CD8-positive, alpha-beta T cell (primary cell): ENCODE measurements at regions of chr14 and their contacts with region 1.

Region 1: GRCh38 chr14:90697577-90698206 is 118.5 kb downstream of the TTC7B start:
- DNase-seq: peak; percentile 55 to 85 (median 73)
- ATAC-seq: peak; percentile 90
- H3K4me3 ChIP-seq: no peak overlapping the region
- H3K4me3 Mint-ChIP-seq: no peak overlapping the region
- H3K27ac ChIP-seq: no peak overlapping the region
- H3K27ac Mint-ChIP-seq: no peak overlapping the region
- H3K4me1 ChIP-seq: no peaks in the 10 kb centered on the region
- H3K4me1 Mint-ChIP-seq: no peaks in the 10 kb centered on the region
- H3K27me3 ChIP-seq: no peaks in the 10 kb centered on the region
- H3K27me3 Mint-ChIP-seq: no peaks in the 10 kb centered on the region
- CTCF ChIP-seq: peak; percentile 88

Region 2: DNA sequence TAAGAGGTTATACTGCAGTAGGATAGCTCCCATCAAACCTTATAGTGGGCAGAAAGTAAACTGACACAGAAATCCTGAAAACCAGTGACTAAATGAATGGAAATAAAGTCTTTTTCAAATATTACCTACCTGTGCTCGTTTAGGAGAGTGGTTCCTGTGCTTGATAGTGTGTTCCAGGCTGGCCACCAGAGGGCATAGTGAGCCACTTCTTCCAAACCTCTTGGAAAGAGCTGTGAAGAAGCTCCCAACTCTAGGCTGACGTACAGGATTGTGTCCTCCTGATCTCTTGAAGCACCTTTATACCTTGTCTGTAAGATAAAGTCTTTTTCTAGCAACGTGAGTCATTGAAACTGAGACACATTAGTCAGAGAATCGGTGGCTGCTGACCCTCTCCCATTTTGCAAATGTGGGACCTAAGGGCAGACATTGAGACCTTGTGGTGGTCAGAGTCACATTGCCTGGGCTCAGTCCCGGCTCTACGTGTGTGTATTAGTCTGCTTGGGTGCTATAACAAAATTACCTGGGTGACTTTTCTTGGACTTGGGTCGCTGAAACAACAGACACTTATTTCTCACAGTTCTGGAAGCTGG is 724.4 kb before region 1 on chr14:
- CTCF ChIA-PET with region 1: interaction called, 3 read pairs
- POLR2A ChIA-PET with region 1: no interaction called
- intact Hi-C with region 1: loop called in 1 of 2 experiments (anchors 10 kb)
- DNase-seq: peak in 8 of 9 experiments; percentile 19 to 62 (median 50)
- ATAC-seq: peak; percentile 61
- H3K4me3 ChIP-seq: no peak overlapping the region
- H3K4me3 Mint-ChIP-seq: no peak overlapping the region
- H3K27ac ChIP-seq: no peak overlapping the region
- H3K27ac Mint-ChIP-seq: no peak overlapping the region
- H3K4me1 ChIP-seq: no peaks in the 10 kb centered on the region
- H3K4me1 Mint-ChIP-seq: peaks cover 6% of the 10 kb centered on the region
- H3K27me3 ChIP-seq: no peaks in the 10 kb centered on the region
- H3K27me3 Mint-ChIP-seq: no peaks in the 10 kb centered on the region
- CTCF ChIP-seq: peak; percentile 67

Region 3: DNA sequence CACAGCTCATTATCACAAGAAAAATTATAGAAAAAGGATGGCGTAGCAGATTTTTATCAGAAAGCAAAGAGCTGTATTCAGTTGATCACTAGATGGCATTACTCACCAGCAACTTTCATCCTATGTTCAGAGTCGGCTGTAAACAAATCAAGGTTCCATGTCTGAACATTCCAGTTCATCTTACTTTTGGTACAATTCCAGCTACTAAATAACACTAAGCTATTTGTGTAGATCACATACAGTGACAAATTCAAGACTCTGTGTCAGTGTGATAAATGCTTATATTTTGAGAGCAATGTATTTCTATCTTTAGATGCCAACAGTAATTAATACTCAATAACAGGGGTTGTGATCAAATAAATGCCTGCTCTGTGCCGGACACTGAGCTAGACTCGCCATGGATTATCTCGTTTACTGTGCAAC is 396.0 kb before region 1 on chr14:
- CTCF ChIA-PET with region 1: interaction called, 26 read pairs
- POLR2A ChIA-PET with region 1: no interaction called
- intact Hi-C with region 1: loop called in 1 of 2 experiments (anchors 1 kb)
- DNase-seq: peak in 2 of 9 experiments; percentile 19 to 36
- ATAC-seq: no peak
- H3K4me3 ChIP-seq: no peak overlapping the region
- H3K4me3 Mint-ChIP-seq: no peak overlapping the region
- H3K27ac ChIP-seq: no peak overlapping the region
- H3K27ac Mint-ChIP-seq: no peak overlapping the region
- H3K4me1 ChIP-seq: peaks cover 4% of the 10 kb centered on the region
- H3K4me1 Mint-ChIP-seq: peaks cover 17% of the 10 kb centered on the region
- H3K27me3 ChIP-seq: no peaks in the 10 kb centered on the region
- H3K27me3 Mint-ChIP-seq: no peaks in the 10 kb centered on the region
- CTCF ChIP-seq: no peak

Region 4: DNA sequence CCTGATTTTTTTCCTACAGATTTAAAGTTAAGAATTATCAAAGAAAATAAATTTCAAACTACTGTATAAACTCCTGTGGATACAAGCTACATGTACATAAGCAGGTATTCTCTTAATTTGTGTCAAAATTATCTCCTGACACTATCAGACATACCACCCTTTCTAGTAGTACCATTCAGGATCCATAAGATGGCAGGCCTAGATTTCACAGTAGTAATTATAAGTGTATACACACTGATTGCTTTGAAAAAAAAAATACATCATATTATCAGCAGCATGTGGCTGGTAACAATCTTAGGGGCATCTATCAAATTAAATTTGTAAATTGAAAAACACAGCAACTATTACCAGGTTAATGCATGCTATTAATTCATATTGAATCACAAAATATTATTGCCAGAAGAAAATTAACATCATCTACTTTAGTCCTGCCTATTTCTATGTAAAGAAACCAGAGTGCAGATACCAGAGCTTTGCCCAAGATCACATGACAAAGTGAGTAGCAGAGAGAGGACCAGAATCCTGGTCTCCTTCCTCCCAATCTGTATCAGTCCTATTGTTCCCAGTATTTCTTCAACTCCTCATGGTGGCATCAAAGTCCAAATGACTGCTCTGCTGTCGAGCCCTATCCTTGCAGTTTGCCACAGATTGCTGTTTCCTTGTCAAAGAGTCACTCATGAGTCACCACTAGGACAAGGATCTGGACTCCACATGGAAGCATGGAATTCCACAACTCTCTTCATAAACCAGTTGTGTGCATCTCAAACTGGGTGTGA is 328.6 kb before region 1 on chr14:
- CTCF ChIA-PET with region 1: interaction called, 62 read pairs
- POLR2A ChIA-PET with region 1: interaction called, 3 read pairs
- intact Hi-C with region 1: loop called (anchors 1 kb)
- DNase-seq: peak in 2 of 9 experiments; percentile 57 to 71
- ATAC-seq: peak; percentile 98
- H3K4me3 ChIP-seq: no peak overlapping the region
- H3K4me3 Mint-ChIP-seq: no peak overlapping the region
- H3K27ac ChIP-seq: no peak overlapping the region
- H3K27ac Mint-ChIP-seq: no peak overlapping the region
- H3K4me1 ChIP-seq: no peaks in the 10 kb centered on the region
- H3K4me1 Mint-ChIP-seq: no peaks in the 10 kb centered on the region
- H3K27me3 ChIP-seq: peaks cover 0 to 3% of the 10 kb centered on the region in 2 experiments
- H3K27me3 Mint-ChIP-seq: no peaks in the 10 kb centered on the region
- CTCF ChIP-seq: peak; percentile 80

Region 5: GRCh38 chr14:90574188-90575131 is 123.2 kb before region 1 on chr14:
- CTCF ChIA-PET with region 1: interaction called, 3 read pairs
- POLR2A ChIA-PET with region 1: no interaction called
- intact Hi-C with region 1: loop called in 1 of 2 experiments (anchors 10 kb)
- DNase-seq: no peak
- ATAC-seq: no peak
- H3K4me3 ChIP-seq: no peak overlapping the region
- H3K4me3 Mint-ChIP-seq: no peak overlapping the region
- H3K27ac ChIP-seq: no peak overlapping the region
- H3K27ac Mint-ChIP-seq: no peak overlapping the region
- H3K4me1 ChIP-seq: no peaks in the 10 kb centered on the region
- H3K4me1 Mint-ChIP-seq: no peaks in the 10 kb centered on the region
- H3K27me3 ChIP-seq: no peaks in the 10 kb centered on the region
- H3K27me3 Mint-ChIP-seq: no peaks in the 10 kb centered on the region
- CTCF ChIP-seq: no peak

Region 6: DNA sequence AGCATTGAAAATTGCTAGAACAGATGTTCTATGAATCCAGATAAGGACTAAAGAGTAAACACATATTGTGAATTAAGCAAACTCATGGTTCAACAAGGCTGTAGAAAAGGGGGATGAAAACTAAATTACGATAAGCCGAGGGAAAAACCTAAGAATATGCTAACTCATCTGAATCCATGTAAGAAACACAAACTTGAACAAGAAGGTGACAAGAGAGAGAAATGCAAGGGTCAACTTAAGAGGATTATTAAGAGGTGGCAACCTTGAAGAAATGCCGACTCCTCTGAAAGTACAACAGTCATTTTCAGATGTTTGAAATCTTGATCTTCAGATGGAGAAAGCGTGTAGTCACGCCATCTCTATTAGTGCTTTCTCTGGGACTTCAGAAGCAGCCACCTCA is 10.0 kb before region 1 on chr14:
- CTCF ChIA-PET with region 1: interaction called, 13 read pairs
- POLR2A ChIA-PET with region 1: no interaction called
- intact Hi-C with region 1: no loop called
- DNase-seq: no peak
- ATAC-seq: no peak
- H3K4me3 ChIP-seq: no peak overlapping the region
- H3K4me3 Mint-ChIP-seq: no peak overlapping the region
- H3K27ac ChIP-seq: no peak overlapping the region
- H3K27ac Mint-ChIP-seq: no peak overlapping the region
- H3K4me1 ChIP-seq: no peaks in the 10 kb centered on the region
- H3K4me1 Mint-ChIP-seq: no peaks in the 10 kb centered on the region
- H3K27me3 ChIP-seq: no peaks in the 10 kb centered on the region
- H3K27me3 Mint-ChIP-seq: no peaks in the 10 kb centered on the region
- CTCF ChIP-seq: no peak

Region 7: DNA sequence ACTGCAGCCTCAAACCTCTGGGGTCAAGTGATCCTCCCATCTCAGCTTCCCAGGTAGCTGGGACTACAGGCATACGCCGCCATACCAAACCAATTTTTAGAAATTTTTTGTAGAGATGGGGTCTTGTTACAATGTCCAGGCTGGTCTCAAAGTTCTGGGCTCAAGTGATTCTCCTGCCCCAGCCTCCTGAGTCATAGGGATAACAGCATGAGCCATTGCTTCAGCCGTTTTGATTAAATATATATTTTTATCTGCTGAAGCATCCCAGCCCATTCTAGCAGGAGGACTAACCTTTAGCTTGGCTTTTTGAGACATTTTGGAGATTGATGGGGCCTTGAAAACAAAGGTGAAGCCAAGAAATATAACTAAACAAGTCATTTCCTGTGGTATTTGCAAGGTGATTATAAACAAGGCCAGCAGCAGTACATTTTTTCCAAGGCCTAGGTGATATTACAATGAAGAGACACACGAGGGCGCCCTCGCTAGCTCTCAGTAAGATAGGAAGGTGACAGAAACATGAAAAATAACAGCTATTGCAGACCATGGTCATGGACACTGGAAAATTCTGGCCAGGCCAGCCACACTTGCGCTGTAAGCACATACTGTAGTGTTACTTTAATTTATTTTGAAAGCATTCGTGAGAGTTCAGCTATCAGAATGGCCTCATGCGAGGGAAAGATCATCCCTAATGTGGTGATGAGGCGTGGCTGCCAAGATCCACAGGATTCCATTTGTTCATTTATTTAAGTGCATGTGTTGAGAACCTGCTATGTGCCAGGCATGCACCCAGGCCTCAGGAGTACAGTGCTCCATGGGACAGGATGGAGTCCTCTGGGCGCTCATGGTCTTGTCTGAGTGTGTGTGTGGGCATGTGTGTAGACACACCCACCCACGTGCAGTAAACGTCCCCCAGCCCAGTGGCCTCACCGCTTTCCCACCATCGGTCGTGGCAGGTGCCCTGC is 479.7 kb after region 1 on chr14:
- CTCF ChIA-PET with region 1: no interaction called
- POLR2A ChIA-PET with region 1: no interaction called
- intact Hi-C with region 1: no loop called
- DNase-seq: peak; percentile 37 to 88 (median 64)
- ATAC-seq: peak; percentile 93
- H3K4me3 ChIP-seq: no peak overlapping the region
- H3K4me3 Mint-ChIP-seq: no peak overlapping the region
- H3K27ac ChIP-seq: peak overlapping the region in 1 of 2 experiments; percentile 52
- H3K27ac Mint-ChIP-seq: peak overlapping the region; percentile 89
- H3K4me1 ChIP-seq: peaks cover 5% of the 10 kb centered on the region
- H3K4me1 Mint-ChIP-seq: peaks cover 12% of the 10 kb centered on the region
- H3K27me3 ChIP-seq: no peaks in the 10 kb centered on the region
- H3K27me3 Mint-ChIP-seq: no peaks in the 10 kb centered on the region
- CTCF ChIP-seq: peak; percentile 89